Psoas muscle (tissue), 8 donors: ENCODE measurements at regions of chr9 and their contacts with region 1.

Region 1: GRCh38 chr9:20319641-20320337 is 302.5 kb downstream of the MLLT3 start:
- DNase-seq: no peak
- ATAC-seq: no peak
- H3K4me3 ChIP-seq: no peak overlapping the region
- H3K27ac ChIP-seq: no peak overlapping the region
- H3K4me1 ChIP-seq: no peaks in the 10 kb centered on the region
- H3K27me3 ChIP-seq: no peaks in the 10 kb centered on the region
- CTCF ChIP-seq: no peak

Region 2: DNA sequence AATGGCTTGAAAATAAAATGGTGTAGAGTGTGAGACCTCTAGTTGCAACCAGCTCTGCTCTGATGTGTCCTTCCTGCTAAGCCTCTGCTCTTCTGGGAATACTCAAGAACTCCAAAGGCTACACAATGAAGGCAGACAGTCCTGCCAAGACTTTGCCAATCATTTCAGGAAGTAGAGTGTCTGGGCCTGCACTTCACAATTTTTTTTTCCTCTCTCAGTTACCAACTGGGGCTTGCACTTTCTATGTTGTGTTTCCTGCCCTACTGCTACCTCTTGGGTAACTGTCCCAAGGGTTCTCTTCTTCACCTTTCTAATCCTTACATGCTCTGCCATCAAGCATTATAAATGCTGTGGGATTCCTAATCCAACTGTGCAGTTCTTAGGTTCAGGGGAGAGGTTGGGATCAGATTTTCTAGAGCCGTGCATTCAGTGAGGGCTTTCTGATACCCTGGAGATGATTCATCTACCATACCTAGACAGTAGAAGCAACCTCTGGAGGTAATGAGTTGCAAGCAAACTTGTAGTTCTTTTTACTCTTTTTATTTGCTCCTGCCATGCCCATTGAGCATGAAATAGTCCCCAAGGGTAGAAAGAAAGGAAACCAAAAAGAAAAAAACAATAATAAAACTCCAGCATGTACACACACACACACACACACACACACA is 63.4 kb before region 1 on chr9:
- intact Hi-C with region 1: loop called in 1 of 2 experiments (anchors 10 kb)
- DNase-seq: no peak
- ATAC-seq: no peak
- H3K4me3 ChIP-seq: no peak overlapping the region
- H3K27ac ChIP-seq: no peak overlapping the region
- H3K4me1 ChIP-seq: no peaks in the 10 kb centered on the region
- H3K27me3 ChIP-seq: no peaks in the 10 kb centered on the region
- CTCF ChIP-seq: no peak